ENCODE measurements at regions of chr14 and their contacts with region 1.

Region 1: DNA sequence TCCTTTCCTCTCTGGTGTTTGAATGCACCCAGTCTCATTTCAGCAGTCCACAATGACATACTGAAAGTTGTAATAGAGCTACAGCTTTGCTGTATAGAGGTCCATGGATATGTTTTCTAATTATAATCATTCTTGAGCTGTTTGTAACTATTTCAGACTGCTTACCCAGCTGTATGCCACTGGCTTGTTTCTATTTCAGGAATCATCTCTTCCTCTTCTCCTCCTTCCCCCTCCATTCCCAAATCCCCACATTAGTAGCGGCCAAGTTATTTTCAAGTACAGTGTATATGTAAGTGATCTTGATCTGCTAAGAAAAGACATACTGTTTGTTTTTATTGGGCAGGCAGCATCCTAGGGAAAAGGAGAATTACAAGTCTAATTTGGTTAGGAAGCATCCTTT is 775.0 kb downstream of the DIO2 start:
- DNase-seq: peak; percentile 24
- ATAC-seq: peak; percentile 24; the same call in 1 of the 2 replicates
- H3K4me3 ChIP-seq: no peak overlapping the region
- H3K27ac ChIP-seq: no peak overlapping the region
- H3K4me1 ChIP-seq: peaks cover 2% of the 10 kb centered on the region; the same call in 1 of the 2 replicates
- H3K27me3 ChIP-seq: no peaks in the 10 kb centered on the region
- CTCF ChIP-seq: no peak
- POLR2A ChIP-seq: no peak
- RAD21 ChIP-seq: no peak

Region 2: DNA sequence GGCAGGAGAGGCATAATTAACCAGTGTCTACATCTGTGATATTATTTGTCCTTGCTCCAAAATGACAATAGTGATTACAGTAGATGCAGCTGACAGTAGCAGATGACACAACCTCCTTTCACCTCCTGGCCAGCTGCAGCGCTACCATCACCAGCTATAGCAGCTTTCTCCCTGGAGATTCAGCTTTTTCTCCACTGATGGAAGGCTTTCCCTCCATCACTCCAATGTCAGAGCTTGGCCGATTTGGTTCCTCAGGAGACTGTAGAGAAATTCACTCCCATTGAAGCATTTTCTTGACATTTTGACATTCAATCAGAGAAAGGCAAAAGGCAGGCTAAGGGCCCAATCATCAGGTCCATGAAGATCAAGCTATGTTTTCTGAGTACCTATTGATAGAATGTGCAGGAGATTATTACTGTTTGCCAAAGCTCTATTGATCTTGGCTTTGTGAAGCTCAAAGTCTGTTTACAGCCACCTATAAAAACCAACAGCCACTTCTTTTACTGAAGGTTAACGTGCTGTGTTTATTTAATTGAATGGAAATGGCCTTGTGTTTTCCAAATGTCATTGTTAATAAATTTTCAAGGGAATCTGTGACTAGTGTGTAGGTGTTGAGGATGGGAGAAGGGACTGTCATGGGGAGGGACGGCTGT is 10.1 kb before region 1 on chr14:
- CTCF ChIA-PET with region 1: no interaction called
- POLR2A ChIA-PET with region 1: no interaction called
- dilution Hi-C with region 1: no loop called
- in situ Hi-C with region 1: no loop called
- intact Hi-C with region 1: loop called (anchors 1 kb)
- DNase-seq: no peak
- ATAC-seq: no peak
- H3K4me3 ChIP-seq: no peak overlapping the region
- H3K27ac ChIP-seq: no peak overlapping the region
- H3K4me1 ChIP-seq: no peaks in the 10 kb centered on the region
- H3K27me3 ChIP-seq: no peaks in the 10 kb centered on the region
- CTCF ChIP-seq: no peak
- POLR2A ChIP-seq: no peak
- RAD21 ChIP-seq: no peak

Region 3: GRCh38 chr14:79483477-79484388 is 47.4 kb after region 1 on chr14:
- CTCF ChIA-PET with region 1: no interaction called
- POLR2A ChIA-PET with region 1: no interaction called
- dilution Hi-C with region 1: no loop called
- in situ Hi-C with region 1: no loop called
- intact Hi-C with region 1: no loop called
- DNase-seq: peak; percentile 93
- ATAC-seq: peak; percentile 93
- H3K4me3 ChIP-seq: no peak overlapping the region
- H3K27ac ChIP-seq: no peak overlapping the region
- H3K4me1 ChIP-seq: no peaks in the 10 kb centered on the region; the same call in 1 of the 2 replicates
- H3K27me3 ChIP-seq: no peaks in the 10 kb centered on the region
- CTCF ChIP-seq: no peak
- POLR2A ChIP-seq: no peak
- RAD21 ChIP-seq: no peak

Region 4: GRCh38 chr14:79557309-79557708 is 121.0 kb after region 1 on chr14:
- CTCF ChIA-PET with region 1: no interaction called
- POLR2A ChIA-PET with region 1: no interaction called
- dilution Hi-C with region 1: no loop called
- in situ Hi-C with region 1: no loop called
- intact Hi-C with region 1: no loop called
- DNase-seq: no peak
- ATAC-seq: no peak
- H3K4me3 ChIP-seq: no peak overlapping the region
- H3K27ac ChIP-seq: no peak overlapping the region
- H3K4me1 ChIP-seq: peaks cover 4% of the 10 kb centered on the region; the same call in 1 of the 2 replicates
- H3K27me3 ChIP-seq: no peaks in the 10 kb centered on the region
- CTCF ChIP-seq: no peak
- POLR2A ChIP-seq: no peak
- RAD21 ChIP-seq: no peak

Measured in IMR-90 (cell line).